Cardiac septum (tissue), 1 donor: ENCODE measurements at regions of chr12 and their contacts with region 1.

Region 1: GRCh38 chr12:123232807-123233543 is at the starts of genes MPHOSPH9 and MTRFR:
- DNase-seq: peak; percentile 99
- total RNA-seq, gene MPHOSPH9: 22.0 TPM
- total RNA-seq, gene MTRFR: 7.8 TPM

Region 2: GRCh38 chr12:122860346-122861090 is 372.5 kb before region 1 on chr12:
- intact Hi-C with region 1: loop called (anchors 2 kb)
- DNase-seq: peak; percentile 95

Region 3: GRCh38 chr12:122974892-122975789 is 257.8 kb before region 1 on chr12 and contains the start of gene OGFOD2:
- intact Hi-C with region 1: loop called (anchors 5 kb)
- DNase-seq: peak; percentile 95
- total RNA-seq, gene OGFOD2: 10.6 TPM

Region 4: GRCh38 chr12:123043536-123044001 is 189.4 kb before region 1 on chr12:
- intact Hi-C with region 1: loop called (anchors 5 kb)
- DNase-seq: peak; percentile 87

Region 5: DNA sequence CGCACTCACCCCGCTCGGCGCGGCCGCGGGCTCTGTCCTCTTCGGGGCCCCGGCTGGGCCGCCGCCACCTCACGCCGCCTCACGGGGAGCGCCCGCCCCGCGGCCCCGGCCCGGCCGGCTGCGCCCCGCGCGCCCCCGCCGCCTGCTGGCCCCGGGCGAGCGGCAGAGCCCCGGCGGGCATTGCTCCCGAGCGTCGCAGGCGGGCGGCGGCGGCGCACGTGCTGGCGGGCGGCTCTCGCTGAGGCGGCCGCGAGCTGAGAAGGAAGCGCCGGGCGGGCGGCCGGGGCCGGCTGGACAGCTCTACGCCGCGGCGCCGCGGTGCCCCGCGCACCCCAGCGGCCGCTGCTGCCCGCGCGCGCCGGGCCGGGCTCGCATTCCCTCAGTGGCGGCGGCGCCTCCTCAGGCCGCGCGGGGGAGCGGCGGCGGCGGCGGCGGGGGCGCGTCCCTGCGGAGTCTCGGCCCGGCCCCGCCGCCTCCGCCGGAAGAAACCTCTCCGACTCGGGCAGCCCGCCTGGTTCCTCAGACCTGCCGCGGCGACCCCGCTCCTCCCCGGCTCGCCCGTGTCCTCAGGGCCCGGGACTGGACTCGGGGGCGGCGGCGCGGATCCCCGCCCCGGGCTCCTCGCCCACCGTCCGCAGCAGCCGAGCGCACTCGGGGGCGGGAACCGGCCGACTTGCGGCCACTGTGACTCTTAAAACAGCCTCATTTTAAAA is 82.1 kb before region 1 on chr12 and contains the start of gene PITPNM2:
- intact Hi-C with region 1: loop called (anchors 5 kb)
- DNase-seq: no peak
- total RNA-seq, gene PITPNM2: 22.2 TPM

Region 6: GRCh38 chr12:123187637-123188036 is 45.3 kb before region 1 on chr12:
- intact Hi-C with region 1: no loop called
- DNase-seq: no peak

Region 7: GRCh38 chr12:123278101-123278627 is 45.2 kb after region 1 on chr12:
- intact Hi-C with region 1: no loop called
- DNase-seq: no peak